Naive thymus-derived CD4-positive, alpha-beta T cell (primary cell): ENCODE measurements at regions of chr14 and their contacts with region 1.

Region 1: GRCh38 chr14:77124345-77125280 is 17.0 kb downstream of the ZDHHC22 start:
- DNase-seq: peak; percentile 49 to 77 (median 66)
- ATAC-seq: peak; percentile 91
- H3K4me3 ChIP-seq: peak overlapping the region; percentile 84
- H3K4me3 Mint-ChIP-seq: peak overlapping the region; percentile 70 to 83 (median 78)
- H3K27ac ChIP-seq: peak overlapping the region; percentile 56
- H3K27ac Mint-ChIP-seq: peak overlapping the region in 3 of 9 donors; percentile 67 to 86 (median 72)
- H3K4me1 ChIP-seq: peaks cover 16 to 48% of the 10 kb centered on the region in 2 donors
- H3K4me1 Mint-ChIP-seq: peaks cover 6 to 41% (median 28%) of the 10 kb centered on the region in 7 donors
- H3K27me3 ChIP-seq: no peaks in the 10 kb centered on the region
- H3K27me3 Mint-ChIP-seq: peaks cover 26 to 56% (median 33%) of the 10 kb centered on the region in 5 donors

Region 2: DNA sequence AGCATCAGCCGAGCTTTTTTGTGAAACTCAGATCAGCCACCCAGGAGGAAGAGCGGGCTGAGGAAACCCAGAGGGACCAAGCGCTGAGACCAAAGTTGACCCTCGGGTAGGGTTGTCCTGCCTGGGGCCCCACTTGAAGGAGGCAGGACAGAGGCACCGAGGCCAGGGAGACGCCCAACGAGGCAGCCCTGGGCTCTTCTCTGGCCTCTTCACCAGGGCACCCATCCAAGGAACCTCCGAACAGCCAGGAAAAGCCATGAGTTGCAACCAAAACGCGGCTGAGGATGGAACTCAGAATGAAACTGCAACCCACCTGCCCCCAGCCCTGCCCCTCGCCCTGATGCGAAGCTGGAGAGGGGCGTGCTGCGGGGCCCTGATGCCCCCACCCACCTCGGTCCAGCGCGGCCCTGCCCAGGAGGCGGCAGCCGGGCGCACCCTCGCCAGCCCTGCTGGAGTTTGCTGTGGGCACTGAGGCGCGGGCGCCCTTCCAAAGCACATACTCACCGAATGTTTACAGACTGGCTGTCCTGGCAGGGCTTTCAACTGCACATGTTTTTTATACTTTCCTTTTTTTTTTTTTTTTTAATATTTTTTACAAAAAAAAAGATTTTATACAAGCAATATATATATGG is 1654.9 kb before region 1 on chr14:
- CTCF ChIA-PET with region 1: no interaction called
- POLR2A ChIA-PET with region 1: no interaction called
- intact Hi-C with region 1: no loop called
- DNase-seq: no peak
- ATAC-seq: no peak
- H3K4me3 ChIP-seq: no peak overlapping the region
- H3K4me3 Mint-ChIP-seq: no peak overlapping the region
- H3K27ac ChIP-seq: no peak overlapping the region
- H3K27ac Mint-ChIP-seq: no peak overlapping the region
- H3K4me1 ChIP-seq: no peaks in the 10 kb centered on the region
- H3K4me1 Mint-ChIP-seq: peaks cover 0 to 9% (median 0%) of the 10 kb centered on the region in 7 donors
- H3K27me3 ChIP-seq: no peaks in the 10 kb centered on the region
- H3K27me3 Mint-ChIP-seq: peaks cover 0 to 4% (median 0%) of the 10 kb centered on the region in 5 donors

Region 3: GRCh38 chr14:76456200-76456599 is 668.4 kb before region 1 on chr14:
- CTCF ChIA-PET with region 1: no interaction called
- POLR2A ChIA-PET with region 1: no interaction called
- intact Hi-C with region 1: no loop called
- DNase-seq: peak in 4 of 9 donors; percentile 0 to 29 (median 10)
- ATAC-seq: peak; percentile 50
- H3K4me3 ChIP-seq: no peak overlapping the region
- H3K4me3 Mint-ChIP-seq: no peak overlapping the region
- H3K27ac ChIP-seq: no peak overlapping the region
- H3K27ac Mint-ChIP-seq: no peak overlapping the region
- H3K4me1 ChIP-seq: no peaks in the 10 kb centered on the region
- H3K4me1 Mint-ChIP-seq: no peaks in the 10 kb centered on the region
- H3K27me3 ChIP-seq: no peaks in the 10 kb centered on the region
- H3K27me3 Mint-ChIP-seq: peaks cover 3 to 30% (median 13%) of the 10 kb centered on the region in 5 donors

Region 4: GRCh38 chr14:77108746-77109145 is 15.9 kb before region 1 on chr14:
- CTCF ChIA-PET with region 1: interaction called, 18 read pairs
- POLR2A ChIA-PET with region 1: interaction called, 10 read pairs
- intact Hi-C with region 1: loop called in 1 of 2 experiments (anchors 1 kb)
- DNase-seq: no peak
- ATAC-seq: no peak
- H3K4me3 ChIP-seq: no peak overlapping the region
- H3K4me3 Mint-ChIP-seq: no peak overlapping the region
- H3K27ac ChIP-seq: no peak overlapping the region
- H3K27ac Mint-ChIP-seq: peak overlapping the region in 1 of 9 donors; percentile 12
- H3K4me1 ChIP-seq: no peaks in the 10 kb centered on the region
- H3K4me1 Mint-ChIP-seq: peaks cover 0 to 11% (median 5%) of the 10 kb centered on the region in 7 donors
- H3K27me3 ChIP-seq: no peaks in the 10 kb centered on the region
- H3K27me3 Mint-ChIP-seq: no peaks in the 10 kb centered on the region